Left ventricle myocardium superior (tissue), 1 donor: ENCODE measurements at regions of chr11 and their contacts with region 1.

Region 1: DNA sequence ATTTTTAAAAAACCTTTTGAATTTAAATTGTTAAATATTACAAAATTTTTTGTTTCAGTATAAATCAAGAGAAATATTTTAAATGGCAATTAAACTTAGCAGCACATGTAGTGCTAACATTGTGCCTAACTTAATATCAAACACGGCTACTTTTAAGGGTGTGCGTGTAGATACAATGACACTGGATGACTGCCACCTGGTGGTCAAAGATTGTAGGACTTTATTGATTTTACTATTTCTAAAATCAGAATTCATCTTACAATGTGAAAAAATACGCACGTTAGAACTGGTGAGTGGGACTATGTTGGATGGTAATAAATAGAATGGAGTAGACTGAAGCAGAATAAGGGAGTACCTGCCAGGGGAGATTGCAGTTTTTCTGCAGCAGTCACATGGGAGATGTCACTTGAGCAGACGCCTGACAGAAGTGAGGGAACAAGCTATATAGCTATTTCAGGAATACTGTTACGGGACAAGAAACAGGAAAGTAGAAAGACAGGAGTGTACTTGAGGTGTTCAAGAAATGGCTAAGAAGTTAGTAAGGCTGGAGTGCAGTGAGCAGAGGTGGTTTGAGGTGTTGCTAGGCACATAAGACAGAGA is 52.9 kb downstream of the UVRAG start:
- DNase-seq: no peak
- ATAC-seq: peak; percentile 79

Region 2: GRCh38 chr11:75802913-75803820 is 64.7 kb before region 1 on chr11:
- intact Hi-C with region 1: loop called (anchors 2 kb)
- DNase-seq: peak; percentile 66
- ATAC-seq: peak; percentile 86

Region 3: DNA sequence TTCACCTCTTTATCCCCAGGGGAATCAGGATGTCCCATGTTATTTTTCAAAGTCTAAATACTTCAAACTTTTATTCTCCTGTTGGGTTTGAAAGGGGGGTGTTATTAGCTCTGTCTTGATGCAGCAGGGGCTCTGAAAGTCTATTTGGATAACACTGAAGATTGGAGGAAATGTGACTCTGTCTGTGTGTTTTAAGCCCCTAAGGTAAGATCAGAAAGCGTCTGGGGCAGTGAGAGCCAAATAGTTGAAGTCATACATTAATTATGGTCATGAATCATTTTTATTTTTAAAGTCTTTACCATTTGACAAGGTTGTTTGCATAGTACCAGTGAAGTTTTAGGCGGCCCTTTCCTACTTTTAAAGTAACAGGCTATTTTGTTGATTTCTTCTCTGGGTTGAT is 86.2 kb after region 1 on chr11:
- intact Hi-C with region 1: no loop called
- DNase-seq: no peak
- ATAC-seq: peak; percentile 60

Region 4: GRCh38 chr11:76041210-76041609 is 173.3 kb after region 1 on chr11:
- intact Hi-C with region 1: no loop called
- DNase-seq: no peak
- ATAC-seq: no peak